Endothelial cell of umbilical vein (primary cell): ENCODE measurements at regions of chr5 and their contacts with region 1.

Region 1: GRCh38 chr5:54217826-54218503 is 92.4 kb downstream of the ARL15 start:
- DNase-seq: peak; percentile 78
- H3K4me3 ChIP-seq: no peak overlapping the region
- H3K27ac ChIP-seq: no peak overlapping the region
- H3K4me1 ChIP-seq: no peaks in the 10 kb centered on the region
- H3K27me3 ChIP-seq: no peaks in the 10 kb centered on the region
- CTCF ChIP-seq: peak; percentile 52 to 65
- POLR2A ChIP-seq: no peak

Region 2: GRCh38 chr5:53123702-53124101 is 1094.3 kb before region 1 on chr5:
- CTCF ChIA-PET with region 1: no interaction called
- POLR2A ChIA-PET with region 1: no interaction called
- dilution Hi-C with region 1: no loop called
- intact Hi-C with region 1: loop called (anchors 5 kb)
- DNase-seq: peak; percentile 21
- H3K4me3 ChIP-seq: no peak overlapping the region
- H3K27ac ChIP-seq: no peak overlapping the region
- H3K4me1 ChIP-seq: no peaks in the 10 kb centered on the region
- H3K27me3 ChIP-seq: peaks cover 0 to 3% of the 10 kb centered on the region in 2 experiments
- CTCF ChIP-seq: no peak
- POLR2A ChIP-seq: no peak

Region 3: DNA sequence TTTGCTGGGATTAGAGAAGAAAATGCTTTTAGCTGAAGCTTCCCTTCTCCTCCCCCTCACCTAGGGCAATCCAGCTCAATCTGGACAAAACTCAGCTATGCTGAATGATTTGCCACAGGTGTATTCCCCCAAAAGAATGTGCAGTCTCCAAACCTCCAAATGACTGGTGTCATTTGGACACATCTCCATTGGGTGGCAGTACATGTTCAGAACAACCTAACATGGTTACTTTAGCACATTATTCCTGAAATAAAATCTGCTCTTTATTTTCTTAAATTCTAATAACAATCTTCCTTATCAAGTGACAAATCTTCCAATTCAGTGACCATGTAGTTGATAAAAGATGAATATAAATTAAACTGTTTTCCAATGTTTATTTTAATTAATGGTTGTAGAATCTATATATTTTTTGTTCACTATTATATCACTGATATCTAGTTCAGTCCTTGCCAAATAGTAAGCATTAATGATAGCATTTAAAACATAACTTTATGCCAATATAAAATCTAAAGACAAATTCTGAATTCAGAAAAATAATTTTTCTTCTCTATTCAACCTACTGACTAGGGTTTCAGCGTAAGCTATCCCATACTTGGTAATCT is 1047.1 kb before region 1 on chr5:
- CTCF ChIA-PET with region 1: interaction called, 4 read pairs
- POLR2A ChIA-PET with region 1: no interaction called
- dilution Hi-C with region 1: no loop called
- intact Hi-C with region 1: loop called (anchors 2 kb)
- DNase-seq: peak; percentile 43
- H3K4me3 ChIP-seq: no peak overlapping the region
- H3K27ac ChIP-seq: no peak overlapping the region
- H3K4me1 ChIP-seq: no peaks in the 10 kb centered on the region
- H3K27me3 ChIP-seq: peaks cover 2 to 12% of the 10 kb centered on the region in 2 experiments
- CTCF ChIP-seq: peak; percentile 41 to 42
- POLR2A ChIP-seq: no peak

Region 4: GRCh38 chr5:53425598-53426511 is 792.1 kb before region 1 on chr5:
- CTCF ChIA-PET with region 1: interaction called, 5 read pairs
- POLR2A ChIA-PET with region 1: no interaction called
- dilution Hi-C with region 1: no loop called
- intact Hi-C with region 1: loop called (anchors 1 kb)
- DNase-seq: no peak
- H3K4me3 ChIP-seq: no peak overlapping the region
- H3K27ac ChIP-seq: no peak overlapping the region
- H3K4me1 ChIP-seq: no peaks in the 10 kb centered on the region
- H3K27me3 ChIP-seq: no peaks in the 10 kb centered on the region
- CTCF ChIP-seq: peak in 1 of 2 donors; percentile 20
- POLR2A ChIP-seq: no peak

Region 5: GRCh38 chr5:53560506-53561191 is 657.3 kb before region 1 on chr5 and contains the start of gene NDUFS4:
- CTCF ChIA-PET with region 1: no interaction called
- POLR2A ChIA-PET with region 1: no interaction called
- dilution Hi-C with region 1: no loop called
- intact Hi-C with region 1: loop called (anchors 5 kb)
- DNase-seq: peak; percentile 85
- H3K4me3 ChIP-seq: peak within 1 kb of the TSS; percentile 86 to 98 (median 89)
- H3K27ac ChIP-seq: peak within 1 kb of the TSS; percentile 63
- H3K4me1 ChIP-seq: peaks cover 10% of the 10 kb centered on the region
- H3K27me3 ChIP-seq: peaks cover 0 to 23% of the 10 kb centered on the region in 2 experiments
- CTCF ChIP-seq: no peak
- POLR2A ChIP-seq: peak; percentile 77
- total RNA-seq, gene NDUFS4: 76.2 and 79.1 TPM in 2 replicates

Region 6: GRCh38 chr5:53874409-53874808 is 343.6 kb before region 1 on chr5:
- CTCF ChIA-PET with region 1: no interaction called
- POLR2A ChIA-PET with region 1: no interaction called
- dilution Hi-C with region 1: no loop called
- intact Hi-C with region 1: loop called (anchors 2 kb)
- DNase-seq: no peak
- H3K4me3 ChIP-seq: no peak overlapping the region
- H3K27ac ChIP-seq: no peak overlapping the region
- H3K4me1 ChIP-seq: no peaks in the 10 kb centered on the region
- H3K27me3 ChIP-seq: peaks cover 0 to under 1% of the 10 kb centered on the region in 2 experiments
- CTCF ChIP-seq: no peak
- POLR2A ChIP-seq: no peak

Region 7: DNA sequence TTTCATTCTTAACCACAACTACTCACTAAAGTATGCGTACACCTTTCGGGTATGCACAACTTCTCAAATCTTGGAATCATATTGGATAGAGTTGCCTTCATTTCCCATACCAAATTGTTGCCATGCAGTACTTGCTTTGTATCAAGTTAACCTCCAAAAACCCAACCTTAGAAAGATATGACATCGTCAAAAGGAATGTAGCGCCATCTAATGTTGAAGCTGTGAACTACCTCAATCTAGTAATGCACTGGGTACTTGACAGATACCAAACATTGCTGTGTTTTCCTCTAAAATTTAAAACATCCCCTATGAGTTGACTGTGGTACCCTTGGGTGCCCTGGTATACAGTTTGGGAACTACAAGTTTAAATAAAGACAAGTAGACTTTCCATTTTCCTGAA is 226.0 kb before region 1 on chr5:
- CTCF ChIA-PET with region 1: no interaction called
- POLR2A ChIA-PET with region 1: no interaction called
- dilution Hi-C with region 1: no loop called
- intact Hi-C with region 1: loop called (anchors 5 kb)
- DNase-seq: peak; percentile 28
- H3K4me3 ChIP-seq: no peak overlapping the region
- H3K27ac ChIP-seq: no peak overlapping the region
- H3K4me1 ChIP-seq: no peaks in the 10 kb centered on the region
- H3K27me3 ChIP-seq: no peaks in the 10 kb centered on the region
- CTCF ChIP-seq: peak; percentile 28 to 30
- POLR2A ChIP-seq: no peak

Region 8: DNA sequence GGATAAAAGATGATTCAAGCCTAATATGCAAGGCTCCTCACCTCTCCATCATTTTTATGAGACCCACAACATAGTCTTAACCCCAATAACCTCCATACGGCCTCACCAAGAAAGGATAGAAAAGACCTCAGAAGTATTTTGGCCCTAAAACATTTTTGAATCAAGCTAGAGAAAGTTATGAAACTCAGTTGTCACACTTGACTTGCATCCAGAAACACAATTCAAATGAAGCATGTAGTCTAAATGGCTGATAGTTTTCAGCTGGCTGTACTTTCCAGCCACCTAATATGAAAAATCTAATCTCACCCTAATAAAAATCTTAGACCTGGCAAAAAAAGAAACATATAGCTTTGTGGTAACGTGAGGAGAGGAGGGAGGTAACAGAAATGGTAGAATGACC is 23.6 kb before region 1 on chr5:
- CTCF ChIA-PET with region 1: no interaction called
- POLR2A ChIA-PET with region 1: no interaction called
- dilution Hi-C with region 1: no loop called
- intact Hi-C with region 1: no loop called
- DNase-seq: no peak
- H3K4me3 ChIP-seq: no peak overlapping the region
- H3K27ac ChIP-seq: no peak overlapping the region
- H3K4me1 ChIP-seq: no peaks in the 10 kb centered on the region
- H3K27me3 ChIP-seq: no peaks in the 10 kb centered on the region
- CTCF ChIP-seq: no peak
- POLR2A ChIP-seq: no peak